WTC11 (cell line): ENCODE measurements at regions of chr5 and their contacts with region 1.

Region 1: DNA sequence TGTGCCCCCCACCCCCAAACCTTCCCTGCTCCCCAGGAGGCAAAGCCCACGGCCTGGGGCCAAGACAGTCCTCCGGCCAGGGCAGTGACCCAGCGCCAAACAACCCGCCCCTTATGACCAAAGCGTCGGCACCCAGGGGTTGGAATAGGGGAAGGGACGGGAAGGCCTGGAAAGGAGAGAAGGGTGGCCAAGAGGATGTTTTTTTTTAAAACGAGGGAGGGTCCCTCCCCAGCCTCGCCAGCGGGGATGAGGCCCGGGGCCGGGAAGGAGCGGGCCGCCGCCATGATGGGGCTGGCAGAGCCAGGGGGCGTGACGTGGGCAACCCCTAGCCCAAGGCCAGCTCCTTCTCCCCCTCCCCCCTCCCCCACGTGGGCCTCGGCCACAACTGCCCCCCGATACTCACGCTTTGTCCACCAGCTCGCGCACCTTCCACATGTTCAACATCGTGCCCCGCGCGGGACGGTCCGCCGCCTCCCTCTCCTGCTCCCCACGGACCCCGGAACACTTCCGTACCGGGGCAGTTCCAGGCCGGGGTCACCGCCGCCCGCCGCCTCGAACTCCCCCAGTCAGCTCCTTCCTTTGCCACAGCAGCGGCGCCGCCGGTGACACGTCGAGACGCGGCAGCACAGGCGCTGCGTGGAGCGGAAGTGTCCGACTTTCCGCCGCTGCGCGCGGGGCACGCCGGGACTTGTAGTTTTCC is at the start of gene CLINT1:
- DNase-seq: peak; percentile 92
- ATAC-seq: peak; percentile 88
- H3K4me3 Mint-ChIP-seq: peak within 1 kb of the TSS; percentile 80
- H3K27ac Mint-ChIP-seq: peak within 1 kb of the TSS; percentile 93
- H3K4me1 Mint-ChIP-seq: peaks cover 51% of the 10 kb centered on the region
- H3K27me3 Mint-ChIP-seq: no peaks in the 10 kb centered on the region; the same call in 1 of the 2 replicates
- CTCF ChIP-seq: no peak
- total RNA-seq, gene CLINT1: 74.6 to 79.6 TPM (median 76.1 TPM) in 3 replicates

Region 2: DNA sequence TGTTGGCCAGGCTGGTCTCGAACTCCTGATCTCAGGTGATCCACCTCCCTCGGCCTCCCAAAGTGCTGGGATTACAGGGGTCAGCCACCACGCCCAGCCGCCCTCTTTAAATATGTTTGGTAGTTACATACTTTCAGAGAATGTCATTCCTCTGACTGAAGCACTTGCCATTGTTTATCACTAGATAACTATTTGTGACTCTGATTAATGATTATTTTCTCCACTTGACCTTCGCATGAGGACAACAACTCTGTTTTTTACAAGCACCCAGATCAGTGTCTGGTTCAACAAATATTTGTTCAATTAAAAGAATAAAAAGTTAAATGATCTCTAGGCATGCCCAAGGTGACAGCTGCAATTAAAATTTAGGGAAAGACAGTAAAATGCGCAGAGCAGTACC is 55.9 kb before region 1 on chr5:
- CTCF ChIA-PET with region 1: no interaction called
- POLR2A ChIA-PET with region 1: no interaction called
- DNase-seq: no peak
- ATAC-seq: no peak
- H3K4me3 Mint-ChIP-seq: no peak overlapping the region
- H3K27ac Mint-ChIP-seq: no peak overlapping the region
- H3K4me1 Mint-ChIP-seq: no peaks in the 10 kb centered on the region
- H3K27me3 Mint-ChIP-seq: no peaks in the 10 kb centered on the region
- CTCF ChIP-seq: no peak

Region 3: DNA sequence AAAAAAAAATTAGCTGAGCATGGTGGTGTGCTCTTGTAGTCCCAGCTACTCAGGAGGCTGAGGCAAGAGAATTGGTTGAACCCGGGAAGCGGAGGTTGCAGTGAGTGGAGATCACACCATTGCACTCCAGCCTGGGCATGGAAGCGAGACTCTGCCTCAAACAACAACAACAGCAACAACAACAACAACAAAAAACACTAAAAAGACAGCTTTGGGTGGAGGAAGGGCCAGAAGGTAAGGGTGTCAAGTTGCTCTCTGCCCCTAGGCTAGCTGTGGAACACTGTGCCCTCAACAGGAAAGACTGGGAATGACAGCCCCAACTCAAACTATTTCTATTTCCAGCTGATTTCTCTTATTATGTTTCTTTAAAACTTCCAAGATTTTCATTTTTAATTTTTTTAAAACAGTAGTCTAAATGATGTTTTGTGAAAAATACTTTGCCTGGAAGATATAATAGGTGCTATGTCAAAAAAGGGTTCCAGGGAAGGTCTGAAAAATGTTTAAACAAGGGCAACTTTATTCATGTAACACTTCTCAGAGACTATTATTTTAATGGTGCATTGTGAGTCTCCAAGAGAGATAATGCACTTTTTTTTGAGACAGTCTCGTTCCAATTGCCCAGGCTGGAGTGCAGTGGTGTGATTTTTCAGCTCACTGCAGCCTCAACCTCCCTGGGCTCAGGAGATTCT is 29.6 kb before region 1 on chr5:
- CTCF ChIA-PET with region 1: interaction called, 10 read pairs
- POLR2A ChIA-PET with region 1: interaction called, 6 read pairs
- DNase-seq: peak; percentile 38
- ATAC-seq: peak; percentile 94
- H3K4me3 Mint-ChIP-seq: no peak overlapping the region
- H3K27ac Mint-ChIP-seq: peak overlapping the region; percentile 60; the same call in 1 of the 2 replicates
- H3K4me1 Mint-ChIP-seq: peaks cover 24% of the 10 kb centered on the region
- H3K27me3 Mint-ChIP-seq: no peaks in the 10 kb centered on the region
- CTCF ChIP-seq: peak; percentile 39; the same call in 1 of the 2 replicates

Region 4: DNA sequence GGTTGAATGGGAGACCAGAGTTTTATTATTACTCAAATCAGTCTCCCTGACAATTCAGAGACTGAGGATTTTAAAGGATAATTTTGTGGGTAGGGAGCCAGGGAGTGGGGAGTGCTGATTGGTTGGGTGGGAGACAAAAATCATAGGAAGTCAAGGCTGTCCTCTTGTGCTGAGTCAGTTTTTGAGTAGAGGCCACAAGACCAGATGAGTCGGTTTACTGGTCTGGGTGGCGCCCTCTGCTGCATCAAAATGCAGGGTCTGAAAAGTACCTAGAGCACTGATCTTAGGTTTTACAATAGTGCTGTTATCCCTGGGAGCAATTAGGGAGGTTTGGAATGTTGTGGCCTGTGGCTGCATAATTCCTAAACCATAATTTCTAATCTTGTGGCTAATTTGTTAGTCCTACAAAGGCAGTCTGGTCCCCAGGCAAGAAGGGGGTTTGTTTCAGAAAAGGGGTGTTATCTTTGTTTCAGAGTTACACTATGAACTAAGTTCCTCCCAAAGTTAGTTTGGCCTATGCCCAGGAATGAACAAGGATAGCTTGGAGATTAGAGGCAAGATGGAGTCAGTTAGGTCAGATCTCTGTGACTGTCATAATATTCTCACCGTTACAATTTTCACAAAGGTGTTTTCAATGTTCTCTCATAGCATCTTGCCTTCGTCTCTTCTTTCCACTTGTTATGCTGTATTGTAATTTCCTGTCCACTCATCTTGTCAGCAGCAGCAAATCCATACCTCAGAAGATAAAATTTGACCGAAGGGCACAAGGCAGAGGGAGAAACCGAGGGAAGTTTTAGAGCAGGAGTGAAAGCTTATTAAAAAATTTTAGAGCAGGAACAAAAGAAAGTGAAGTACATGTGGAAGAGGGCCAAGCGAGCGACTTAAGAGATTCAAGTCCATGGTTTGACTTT is 59.5 kb after region 1 on chr5:
- CTCF ChIA-PET with region 1: interaction called, 22 read pairs
- POLR2A ChIA-PET with region 1: no interaction called
- DNase-seq: peak; percentile 76
- ATAC-seq: peak; percentile 89
- H3K4me3 Mint-ChIP-seq: no peak overlapping the region
- H3K27ac Mint-ChIP-seq: no peak overlapping the region
- H3K4me1 Mint-ChIP-seq: peaks cover 54% of the 10 kb centered on the region
- H3K27me3 Mint-ChIP-seq: no peaks in the 10 kb centered on the region
- CTCF ChIP-seq: peak; percentile 29; the same call in 1 of the 2 replicates